ENCODE measurements at regions of chr9 and their contacts with region 1.

Region 1: DNA sequence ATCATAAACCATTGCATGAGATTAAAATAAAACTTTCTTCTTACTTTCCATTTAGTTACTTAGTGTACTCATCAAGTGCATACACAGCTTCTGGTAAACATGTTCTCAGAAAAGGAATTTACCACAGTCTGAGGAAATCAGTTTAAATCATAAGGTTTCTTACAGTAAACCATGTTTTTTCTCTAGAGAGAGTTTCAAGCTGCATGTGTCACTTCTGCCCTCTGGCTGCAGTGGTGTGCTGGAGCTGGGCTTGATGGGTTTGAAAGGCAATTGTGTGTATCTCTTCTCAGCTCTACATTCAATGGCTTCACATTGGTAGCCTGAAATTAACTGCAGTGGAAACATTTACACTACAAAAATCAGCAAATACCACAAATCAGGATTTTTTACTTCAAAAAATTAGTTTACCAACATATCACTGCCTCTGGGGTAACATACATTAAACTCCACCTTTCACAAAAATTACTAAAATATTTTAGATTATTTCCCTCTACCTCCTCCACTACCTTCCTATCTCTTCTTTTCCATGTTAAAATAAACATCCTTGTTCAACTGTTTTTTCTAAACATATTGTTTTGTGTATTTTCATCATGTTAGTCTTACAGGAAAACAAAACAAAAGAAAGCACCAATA is 414.3 kb downstream of the ANXA1 start:
- DNase-seq: peak in 2 of 5 donors; percentile 21 to 28
- ATAC-seq: peak in 2 of 4 donors; percentile 57 to 59
- H3K4me3 ChIP-seq: no peak overlapping the region
- H3K27ac ChIP-seq: no peak overlapping the region
- H3K4me1 ChIP-seq: no peaks in the 10 kb centered on the region
- H3K27me3 ChIP-seq: no peaks in the 10 kb centered on the region
- CTCF ChIP-seq: peak in 11 of 12 donors; percentile 44 to 70 (median 55)
- POLR2A ChIP-seq: no peak

Region 2: GRCh38 chr9:73200694-73201452 is 365.1 kb before region 1 on chr9:
- intact Hi-C with region 1: loop called in 2 of 10 experiments (anchors 10 kb)
- DNase-seq: no peak
- ATAC-seq: no peak
- H3K4me3 ChIP-seq: no peak overlapping the region
- H3K27ac ChIP-seq: no peak overlapping the region
- H3K4me1 ChIP-seq: no peaks in the 10 kb centered on the region
- H3K27me3 ChIP-seq: peaks cover 0 to 19% (median 0%) of the 10 kb centered on the region in 9 donors
- CTCF ChIP-seq: peak; percentile 27 to 63 (median 50)
- POLR2A ChIP-seq: no peak

Region 3: DNA sequence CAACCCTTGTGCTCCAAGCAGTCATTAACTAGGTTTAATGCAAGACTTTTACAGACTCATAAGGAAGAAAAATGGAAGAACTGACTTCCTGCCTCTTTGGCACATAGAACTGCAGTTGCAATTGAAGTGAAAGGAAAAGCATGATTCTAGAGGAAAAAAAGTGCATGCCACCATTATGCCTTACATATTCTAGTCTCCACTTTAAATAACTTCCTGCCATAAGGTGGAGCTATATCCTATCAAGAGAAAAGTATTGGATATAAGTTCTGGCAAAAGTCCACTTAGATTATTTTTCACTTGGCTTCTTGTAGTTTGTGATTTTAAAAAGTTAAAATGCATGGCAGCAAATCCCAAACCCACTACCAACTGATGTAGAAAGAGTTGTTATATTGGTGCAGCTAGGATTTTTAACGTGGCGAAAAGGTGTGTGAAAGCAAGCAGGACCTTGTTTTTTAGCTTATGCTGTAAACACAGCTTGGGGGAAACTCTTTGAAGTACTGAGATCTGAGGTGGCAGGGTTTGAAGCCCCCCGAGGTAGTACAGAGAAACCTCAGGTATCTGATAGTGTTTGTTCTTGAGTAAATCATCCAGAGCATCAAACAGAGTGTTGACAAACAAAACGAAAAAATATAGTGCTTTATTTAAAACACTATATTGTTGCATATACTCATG is 296.4 kb before region 1 on chr9:
- intact Hi-C with region 1: loop called (anchors 2 to 5 kb)
- DNase-seq: no peak
- ATAC-seq: no peak
- H3K4me3 ChIP-seq: peak overlapping the region in 1 of 12 donors; percentile 17
- H3K27ac ChIP-seq: no peak overlapping the region
- H3K4me1 ChIP-seq: no peaks in the 10 kb centered on the region
- H3K27me3 ChIP-seq: no peaks in the 10 kb centered on the region
- CTCF ChIP-seq: peak in 10 of 12 donors; percentile 11 to 45 (median 38)
- POLR2A ChIP-seq: no peak

Measured in heart left ventricle (tissue), 16 donors.